Psoas muscle (tissue), 8 donors: ENCODE measurements at regions of chr14 and their contacts with region 1.

Region 1: GRCh38 chr14:89416002-89416995 is 734 bp downstream of the FOXN3 start:
- DNase-seq: peak; percentile 99 to 100
- ATAC-seq: peak; percentile 86 to 91 (median 86)
- H3K4me3 ChIP-seq: peak overlapping the region; percentile 82
- H3K27ac ChIP-seq: peak overlapping the region; percentile 96
- H3K4me1 ChIP-seq: peaks cover 22% of the 10 kb centered on the region
- H3K27me3 ChIP-seq: no peaks in the 10 kb centered on the region
- CTCF ChIP-seq: no peak

Region 2: DNA sequence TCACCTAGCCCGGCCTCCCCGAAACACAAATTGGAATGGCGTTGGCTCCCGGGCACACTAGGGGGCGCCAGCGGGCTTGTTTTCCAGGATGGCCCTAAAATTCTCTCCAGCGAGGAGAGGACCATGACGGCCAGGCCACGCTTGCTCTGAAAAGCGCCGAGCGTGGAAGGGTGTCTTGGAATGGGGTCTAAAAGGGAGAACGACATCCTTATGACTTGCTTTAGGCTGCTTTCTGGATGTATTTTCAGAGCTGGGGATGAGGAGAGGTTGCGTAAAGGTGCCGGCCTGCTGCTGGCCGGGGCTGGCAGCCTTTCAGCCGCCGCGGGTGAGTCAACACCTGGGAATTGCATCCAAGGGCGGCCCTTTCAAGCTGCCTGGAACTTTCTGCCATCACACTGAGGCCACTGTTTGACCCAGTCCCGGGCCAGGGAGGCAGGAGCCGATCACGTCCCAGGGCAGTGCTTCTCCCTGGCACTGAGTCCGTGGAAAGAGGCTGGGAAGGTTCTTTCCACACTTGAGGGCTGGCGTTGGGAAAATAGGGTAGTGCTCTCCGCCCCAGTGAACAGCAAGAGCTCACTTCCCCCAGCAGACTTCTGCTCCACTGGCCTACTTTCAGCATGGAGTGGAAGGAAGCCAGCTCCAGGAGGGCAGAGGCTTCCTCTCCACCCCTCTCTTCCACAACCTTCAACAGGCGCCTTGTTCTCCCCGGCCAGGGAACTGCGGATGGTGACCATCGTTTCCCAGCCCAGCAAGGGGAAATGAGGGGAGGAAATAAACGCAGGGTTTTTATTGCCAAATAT is 375.6 kb before region 1 on chr14:
- intact Hi-C with region 1: loop called (anchors 1 to 5 kb)
- DNase-seq: peak; percentile 91 to 94
- ATAC-seq: peak; percentile 98 to 99 (median 98)
- H3K4me3 ChIP-seq: peak overlapping the region; percentile 62
- H3K27ac ChIP-seq: peak overlapping the region; percentile 87
- H3K4me1 ChIP-seq: peaks cover 10% of the 10 kb centered on the region
- H3K27me3 ChIP-seq: no peaks in the 10 kb centered on the region
- CTCF ChIP-seq: peak; percentile 93

Region 3: DNA sequence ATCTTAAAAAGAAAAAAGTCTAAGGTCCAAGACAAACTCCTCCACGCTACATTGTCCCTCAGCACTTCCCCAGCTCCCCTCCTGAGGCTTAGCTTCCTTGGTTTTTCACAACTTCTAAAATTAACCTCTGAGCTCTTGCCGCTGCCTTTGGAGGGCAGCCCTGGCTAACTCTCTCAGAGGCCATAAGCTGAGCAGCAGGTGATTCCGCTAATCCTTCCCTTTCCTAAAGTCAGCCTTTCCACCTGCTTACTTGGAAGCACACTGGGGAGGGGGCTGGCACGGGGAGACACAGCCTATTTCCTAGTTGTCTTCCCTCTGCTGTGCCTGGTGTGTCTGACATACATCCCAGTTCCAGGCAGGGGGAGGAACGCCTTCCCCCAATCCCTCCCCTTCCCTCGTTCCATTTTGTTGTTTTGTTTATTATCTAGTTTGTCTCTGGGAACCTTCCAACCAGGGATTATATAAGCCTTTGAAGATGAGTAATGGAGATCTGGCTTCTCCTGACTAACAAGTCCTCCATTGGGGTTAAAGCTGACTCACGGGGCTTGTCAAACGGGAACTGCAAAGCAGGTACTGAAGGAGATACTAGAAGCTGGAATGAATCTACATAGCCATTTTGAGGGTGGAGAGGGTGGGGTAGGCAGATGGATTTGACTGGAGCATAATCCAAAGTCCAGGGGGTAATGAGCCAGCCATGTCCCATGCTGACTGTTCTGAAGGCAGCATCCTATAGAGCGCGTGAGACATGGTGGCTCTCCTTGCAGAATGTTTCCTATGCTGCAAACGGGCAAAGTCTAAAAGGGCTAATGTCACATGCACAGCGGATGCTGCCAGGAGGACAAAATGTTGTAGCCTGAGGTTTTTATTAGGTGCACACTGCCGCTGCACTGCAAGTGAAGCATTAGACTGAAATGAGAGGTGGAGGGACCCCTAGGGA is 230.1 kb before region 1 on chr14:
- intact Hi-C with region 1: loop called (anchors 5 to 10 kb)
- DNase-seq: peak in 1 of 2 donors; percentile 69
- ATAC-seq: peak; percentile 79 to 90 (median 86)
- H3K4me3 ChIP-seq: peak overlapping the region; percentile 44
- H3K27ac ChIP-seq: peak overlapping the region; percentile 92
- H3K4me1 ChIP-seq: peaks cover 45% of the 10 kb centered on the region
- H3K27me3 ChIP-seq: no peaks in the 10 kb centered on the region
- CTCF ChIP-seq: no peak

Region 4: GRCh38 chr14:89365061-89365801 is 51.1 kb before region 1 on chr14:
- intact Hi-C with region 1: no loop called
- DNase-seq: no peak
- ATAC-seq: no peak
- H3K4me3 ChIP-seq: no peak overlapping the region
- H3K27ac ChIP-seq: no peak overlapping the region
- H3K4me1 ChIP-seq: peaks cover 62% of the 10 kb centered on the region
- H3K27me3 ChIP-seq: no peaks in the 10 kb centered on the region
- CTCF ChIP-seq: no peak